Vagina (tissue), 2 donors: ENCODE measurements at regions of chr14 and their contacts with region 1.

Region 1: GRCh38 chr14:100621806-100622205 is 34.6 kb upstream of the BEGAIN start:
- DNase-seq: no peak
- H3K4me3 ChIP-seq: no peak overlapping the region
- H3K27ac ChIP-seq: no peak overlapping the region
- H3K4me1 ChIP-seq: peaks cover 11% of the 10 kb centered on the region
- H3K27me3 ChIP-seq: no peaks in the 10 kb centered on the region
- CTCF ChIP-seq: no peak
- POLR2A ChIP-seq: no peak

Region 2: DNA sequence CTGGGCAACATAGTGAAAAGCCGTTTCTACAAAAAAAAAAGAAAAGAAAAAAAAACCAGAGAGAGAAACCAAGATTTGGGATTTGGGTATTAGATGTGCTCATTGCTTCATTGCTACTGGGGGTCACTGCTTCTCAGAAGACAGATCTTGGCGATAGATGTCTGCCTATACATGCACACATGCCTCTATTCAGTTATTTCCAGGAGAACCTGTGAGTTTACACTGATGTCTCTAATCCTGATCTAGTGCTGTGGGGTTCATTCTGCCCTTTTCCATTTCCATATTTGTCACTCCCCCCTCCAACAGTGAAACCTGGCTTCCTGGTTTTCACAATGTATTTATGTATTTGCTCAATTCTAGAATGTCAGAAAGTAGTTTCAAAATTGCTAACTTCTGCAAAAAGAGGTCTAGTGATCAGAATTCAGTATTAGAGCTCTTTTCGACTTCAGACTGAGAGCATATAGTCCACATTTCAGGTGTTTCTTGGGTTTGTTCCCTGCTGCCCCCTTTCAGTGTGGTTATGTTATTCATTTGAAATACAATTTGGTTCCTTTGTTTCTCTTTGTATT is 187.7 kb before region 1 on chr14:
- intact Hi-C with region 1: loop called (anchors 5 kb)
- DNase-seq: no peak
- H3K4me3 ChIP-seq: no peak overlapping the region
- H3K27ac ChIP-seq: no peak overlapping the region
- H3K4me1 ChIP-seq: peaks cover 4% of the 10 kb centered on the region
- H3K27me3 ChIP-seq: no peaks in the 10 kb centered on the region
- CTCF ChIP-seq: no peak
- POLR2A ChIP-seq: no peak